ENCODE measurements at regions of chr18 and their contacts with region 1.

Region 1: GRCh38 chr18:12236934-12237832 is 17.0 kb upstream of the CIDEA start:
- DNase-seq: peak; percentile 70 to 82
- ATAC-seq: peak; percentile 95 to 98 (median 96)
- H3K4me3 ChIP-seq: no peak overlapping the region
- H3K27ac ChIP-seq: no peak overlapping the region
- H3K4me1 ChIP-seq: peaks cover 0 to 7% (median 0%) of the 10 kb centered on the region in 9 donors
- H3K27me3 ChIP-seq: peaks cover 0 to 23% (median 7%) of the 10 kb centered on the region in 7 donors
- CTCF ChIP-seq: peak; percentile 80 to 93 (median 89)

Region 2: DNA sequence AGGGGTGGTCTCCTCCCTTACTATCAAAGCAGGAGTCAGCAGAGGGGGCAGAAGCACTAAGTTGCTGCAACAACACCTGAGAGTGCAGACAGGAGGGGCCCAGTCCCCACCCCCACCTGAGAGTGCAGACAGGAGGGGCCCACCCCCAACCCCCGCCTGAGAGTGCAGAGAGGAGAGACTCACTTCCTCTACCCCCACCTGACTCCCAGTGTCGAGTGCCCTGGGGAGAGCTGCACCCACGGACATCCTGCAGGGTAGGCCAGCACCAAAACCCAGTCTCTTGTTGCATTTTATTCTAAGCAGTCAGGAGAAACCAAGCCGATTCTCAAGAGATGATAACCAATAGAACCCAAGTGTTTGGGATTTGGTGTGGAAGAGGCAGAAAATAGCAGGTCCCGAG is 1633.0 kb before region 1 on chr18:
- intact Hi-C with region 1: loop called in 1 of 10 experiments (anchors 10 kb)
- DNase-seq: no peak
- ATAC-seq: no peak
- H3K4me3 ChIP-seq: no peak overlapping the region
- H3K27ac ChIP-seq: no peak overlapping the region
- H3K4me1 ChIP-seq: no peaks in the 10 kb centered on the region
- H3K27me3 ChIP-seq: no peaks in the 10 kb centered on the region
- CTCF ChIP-seq: no peak

Region 3: GRCh38 chr18:11669271-11669947 is 567.8 kb before region 1 on chr18:
- intact Hi-C with region 1: loop called in 1 of 10 experiments (anchors 10 kb)
- DNase-seq: no peak
- ATAC-seq: no peak
- H3K4me3 ChIP-seq: no peak overlapping the region
- H3K27ac ChIP-seq: no peak overlapping the region
- H3K4me1 ChIP-seq: no peaks in the 10 kb centered on the region
- H3K27me3 ChIP-seq: peaks cover 0 to 53% (median 27%) of the 10 kb centered on the region in 7 donors
- CTCF ChIP-seq: no peak

Region 4: DNA sequence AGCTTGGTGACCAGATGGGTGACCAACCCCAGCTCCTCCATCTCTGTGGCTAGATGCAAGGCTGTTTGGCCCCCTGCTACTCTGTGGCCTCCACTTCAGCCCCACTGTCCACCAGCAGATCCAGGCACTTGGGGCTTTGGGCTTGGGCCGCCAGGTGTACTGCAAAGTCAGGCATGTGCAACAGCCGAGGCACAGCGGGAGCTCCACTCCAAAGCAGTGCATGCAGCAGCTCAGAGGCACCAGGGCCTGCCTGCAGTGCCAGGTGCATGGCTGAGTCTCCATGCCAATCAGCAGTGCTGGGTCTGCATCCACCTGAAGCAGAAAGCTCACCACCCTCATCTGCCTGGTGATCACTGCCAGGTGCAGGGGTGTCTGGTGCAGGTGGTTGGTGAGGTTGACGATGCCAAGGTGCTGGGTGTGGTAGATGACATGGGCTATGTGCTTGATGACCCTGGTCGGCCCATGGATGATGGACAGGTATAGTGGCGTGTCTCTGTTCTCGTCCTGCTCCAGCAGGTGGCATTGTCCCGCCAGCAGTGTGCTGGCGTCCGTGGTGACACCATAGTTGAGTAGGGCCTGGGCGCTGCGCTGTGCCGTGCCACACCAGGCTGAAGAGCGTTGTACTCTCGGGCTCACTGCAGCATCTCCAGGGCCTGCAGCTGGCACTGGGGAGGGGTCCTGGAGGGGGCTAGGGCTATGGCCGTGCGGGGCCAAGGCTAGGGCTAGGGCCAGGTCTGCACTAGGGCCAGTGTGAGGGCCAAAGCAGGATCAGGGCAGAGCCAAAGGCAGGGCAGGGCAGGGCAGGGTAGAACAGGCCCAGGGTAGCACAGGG is 144.6 kb before region 1 on chr18:
- intact Hi-C with region 1: loop called in 8 of 10 experiments (anchors 5 to 10 kb)
- DNase-seq: peak in 1 of 2 donors; percentile 21
- ATAC-seq: peak; percentile 67 to 85 (median 80)
- H3K4me3 ChIP-seq: no peak overlapping the region
- H3K27ac ChIP-seq: no peak overlapping the region
- H3K4me1 ChIP-seq: no peaks in the 10 kb centered on the region
- H3K27me3 ChIP-seq: peaks cover 0 to 3% (median 0%) of the 10 kb centered on the region in 7 donors
- CTCF ChIP-seq: peak in 7 of 9 donors; percentile 26 to 46 (median 35)